Prostate gland (tissue), 2 donors: ENCODE measurements at regions of chr5 and their contacts with region 1.

Region 1: GRCh38 chr5:160021831-160022446 is 13.0 kb downstream of the TTC1 start:
- DNase-seq: peak; percentile 62
- H3K4me3 ChIP-seq: no peak overlapping the region
- H3K27ac ChIP-seq: no peak overlapping the region
- H3K4me1 ChIP-seq: no peaks in the 10 kb centered on the region
- H3K27me3 ChIP-seq: no peaks in the 10 kb centered on the region
- CTCF ChIP-seq: peak; percentile 70 to 90 (median 86)
- POLR2A ChIP-seq: no peak

Region 2: DNA sequence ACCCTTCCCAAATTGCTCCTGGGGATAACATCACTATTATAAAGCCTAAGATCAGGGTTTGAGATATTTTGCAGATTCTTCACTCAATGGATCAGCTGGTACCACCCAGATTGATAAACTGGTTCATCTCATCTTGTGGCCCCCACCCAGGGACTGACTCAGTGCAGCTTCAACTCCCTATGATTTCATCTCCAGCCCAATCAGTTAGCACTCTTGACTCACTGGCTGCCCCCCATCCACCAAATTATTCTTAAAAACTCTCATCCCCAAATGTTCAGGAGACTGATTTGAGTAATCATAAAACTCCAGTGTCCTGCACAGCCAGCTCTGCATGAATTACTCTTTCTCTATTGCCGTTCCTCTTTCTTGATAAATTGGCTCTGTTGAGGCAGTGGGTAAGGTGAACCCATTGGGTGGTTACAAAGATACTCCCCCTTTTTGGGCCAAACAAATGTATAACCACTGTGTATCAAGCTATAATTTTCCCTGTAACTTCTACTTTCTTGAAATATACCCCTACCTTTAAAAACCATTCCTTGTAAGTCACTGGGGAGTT is 428.3 kb before region 1 on chr5:
- intact Hi-C with region 1: no loop called
- DNase-seq: no peak
- H3K4me3 ChIP-seq: no peak overlapping the region
- H3K27ac ChIP-seq: no peak overlapping the region
- H3K4me1 ChIP-seq: no peaks in the 10 kb centered on the region
- H3K27me3 ChIP-seq: no peaks in the 10 kb centered on the region
- CTCF ChIP-seq: no peak
- POLR2A ChIP-seq: no peak

Region 3: GRCh38 chr5:160199410-160199911 is 177.5 kb after region 1 on chr5:
- intact Hi-C with region 1: loop called (anchors 2 kb)
- DNase-seq: peak; percentile 46
- H3K4me3 ChIP-seq: peak overlapping the region; percentile 25 to 28
- H3K27ac ChIP-seq: no peak overlapping the region
- H3K4me1 ChIP-seq: no peaks in the 10 kb centered on the region
- H3K27me3 ChIP-seq: no peaks in the 10 kb centered on the region
- CTCF ChIP-seq: peak; percentile 90 to 96 (median 92)
- POLR2A ChIP-seq: no peak

Region 4: GRCh38 chr5:160342403-160342941 is 320.5 kb after region 1 on chr5:
- intact Hi-C with region 1: loop called (anchors 5 kb)
- DNase-seq: no peak
- H3K4me3 ChIP-seq: no peak overlapping the region
- H3K27ac ChIP-seq: no peak overlapping the region
- H3K4me1 ChIP-seq: no peaks in the 10 kb centered on the region
- H3K27me3 ChIP-seq: no peaks in the 10 kb centered on the region
- CTCF ChIP-seq: no peak
- POLR2A ChIP-seq: no peak

Region 5: GRCh38 chr5:160390787-160391696 is 369.1 kb after region 1 on chr5:
- intact Hi-C with region 1: loop called (anchors 5 kb)
- DNase-seq: no peak
- H3K4me3 ChIP-seq: no peak overlapping the region
- H3K27ac ChIP-seq: no peak overlapping the region
- H3K4me1 ChIP-seq: no peaks in the 10 kb centered on the region
- H3K27me3 ChIP-seq: no peaks in the 10 kb centered on the region
- CTCF ChIP-seq: peak in 2 of 4 experiments; percentile 36 to 39
- POLR2A ChIP-seq: no peak